Heart right ventricle (tissue), 16 donors: ENCODE measurements at regions of chr5 and their contacts with region 1.

Region 1: GRCh38 chr5:37837414-37838032 is 2.3 kb downstream of the GDNF start:
- DNase-seq: peak; percentile 60 to 79
- ATAC-seq: peak; percentile 64 to 87 (median 79)
- H3K4me3 ChIP-seq: peak overlapping the region; percentile 24 to 55 (median 46)
- H3K27ac ChIP-seq: peak overlapping the region in 2 of 10 donors; percentile 4 to 11
- H3K4me1 ChIP-seq: peaks cover 0 to 50% (median 39%) of the 10 kb centered on the region in 9 donors
- H3K27me3 ChIP-seq: peaks cover 20 to 100% (median 99%) of the 10 kb centered on the region in 7 donors
- CTCF ChIP-seq: peak; percentile 60 to 85 (median 79)

Region 2: GRCh38 chr5:37412515-37413277 is 424.8 kb before region 1 on chr5:
- intact Hi-C with region 1: loop called in 1 of 10 experiments (anchors 10 kb)
- DNase-seq: peak in 1 of 2 donors; percentile 60
- ATAC-seq: peak; percentile 65 to 88 (median 80)
- H3K4me3 ChIP-seq: no peak overlapping the region
- H3K27ac ChIP-seq: no peak overlapping the region
- H3K4me1 ChIP-seq: no peaks in the 10 kb centered on the region
- H3K27me3 ChIP-seq: no peaks in the 10 kb centered on the region
- CTCF ChIP-seq: peak; percentile 51 to 91 (median 86)

Region 3: GRCh38 chr5:37900692-37901091 is 63.2 kb after region 1 on chr5:
- intact Hi-C with region 1: loop called in 1 of 10 experiments (anchors 5 kb)
- DNase-seq: peak; percentile 69 to 77
- ATAC-seq: peak; percentile 85 to 97 (median 92)
- H3K4me3 ChIP-seq: no peak overlapping the region
- H3K27ac ChIP-seq: no peak overlapping the region
- H3K4me1 ChIP-seq: peaks cover 0 to 12% (median 4%) of the 10 kb centered on the region in 9 donors
- H3K27me3 ChIP-seq: no peaks in the 10 kb centered on the region
- CTCF ChIP-seq: peak in 4 of 9 donors; percentile 15 to 38 (median 26)

Region 4: DNA sequence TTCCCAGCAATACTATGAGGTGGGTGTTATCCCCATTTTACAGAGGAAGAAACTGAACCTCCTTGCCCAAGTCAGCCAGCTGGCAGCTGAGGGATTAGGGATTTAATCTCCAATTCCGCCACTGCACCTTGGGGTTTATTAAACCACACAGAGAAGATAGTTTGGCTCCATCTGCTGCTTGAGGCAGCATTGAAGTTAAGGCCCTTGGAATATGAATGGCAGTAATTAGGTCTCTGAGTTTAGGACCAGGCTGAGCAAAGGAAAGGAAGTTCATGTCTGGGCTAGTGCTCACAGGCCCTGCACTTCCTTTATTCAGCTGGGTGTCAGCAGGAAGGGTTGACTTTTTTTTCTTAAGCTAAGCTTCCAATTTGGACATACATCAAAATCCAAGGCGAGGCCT is 89.2 kb after region 1 on chr5:
- intact Hi-C with region 1: no loop called
- DNase-seq: no peak
- ATAC-seq: peak in 2 of 8 donors; percentile 42
- H3K4me3 ChIP-seq: no peak overlapping the region
- H3K27ac ChIP-seq: no peak overlapping the region
- H3K4me1 ChIP-seq: peaks cover 0 to 4% (median 0%) of the 10 kb centered on the region in 9 donors
- H3K27me3 ChIP-seq: no peaks in the 10 kb centered on the region
- CTCF ChIP-seq: peak in 1 of 9 donors; percentile 8

Region 5: GRCh38 chr5:37991267-37991902 is 153.9 kb after region 1 on chr5:
- intact Hi-C with region 1: loop called in 1 of 10 experiments (anchors 10 kb)
- DNase-seq: no peak
- ATAC-seq: peak; percentile 28 to 81 (median 64)
- H3K4me3 ChIP-seq: no peak overlapping the region
- H3K27ac ChIP-seq: peak overlapping the region in 6 of 10 donors; percentile 35 to 72 (median 44)
- H3K4me1 ChIP-seq: peaks cover 0 to 46% (median 9%) of the 10 kb centered on the region in 9 donors
- H3K27me3 ChIP-seq: no peaks in the 10 kb centered on the region
- CTCF ChIP-seq: no peak

Region 6: DNA sequence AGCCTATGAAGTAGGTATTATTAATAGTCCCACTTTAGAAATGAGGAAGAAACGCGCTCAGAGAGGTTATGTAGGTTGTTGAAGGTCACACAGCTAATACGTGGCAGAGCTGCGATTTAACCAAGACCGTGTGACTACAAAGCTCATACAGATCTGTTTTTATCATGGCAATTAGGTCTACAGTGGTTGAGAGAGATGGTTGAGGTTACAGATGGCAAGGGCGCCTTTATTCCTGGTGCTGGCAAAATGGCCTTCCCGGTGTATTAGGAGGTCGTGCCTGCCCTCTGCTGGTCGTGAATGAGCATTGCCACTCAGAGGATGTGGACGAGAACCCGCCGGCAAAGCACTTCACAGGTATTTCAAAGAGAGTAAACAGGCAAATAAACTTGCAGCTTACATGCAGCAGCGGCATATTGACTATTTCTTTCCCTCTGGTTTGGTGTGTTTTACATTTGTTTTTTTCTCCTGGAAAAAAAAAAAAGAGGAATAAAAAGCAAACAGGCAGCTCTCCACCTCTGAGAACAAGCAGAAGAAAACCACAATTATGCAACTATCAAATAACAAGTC is 355.6 kb after region 1 on chr5:
- intact Hi-C with region 1: loop called (anchors 1 to 5 kb)
- DNase-seq: peak; percentile 56 to 66
- ATAC-seq: peak; percentile 67 to 89 (median 76)
- H3K4me3 ChIP-seq: no peak overlapping the region
- H3K27ac ChIP-seq: no peak overlapping the region
- H3K4me1 ChIP-seq: no peaks in the 10 kb centered on the region
- H3K27me3 ChIP-seq: peaks cover 0 to 29% (median 21%) of the 10 kb centered on the region in 7 donors
- CTCF ChIP-seq: peak; percentile 68 to 88 (median 86)